Activated CD8-positive, alpha-beta T cell treated with anti-CD3 and anti-CD28 coated beads for 36 hours (primary cell): ENCODE measurements at regions of chr1 and their contacts with region 1.

Region 1: DNA sequence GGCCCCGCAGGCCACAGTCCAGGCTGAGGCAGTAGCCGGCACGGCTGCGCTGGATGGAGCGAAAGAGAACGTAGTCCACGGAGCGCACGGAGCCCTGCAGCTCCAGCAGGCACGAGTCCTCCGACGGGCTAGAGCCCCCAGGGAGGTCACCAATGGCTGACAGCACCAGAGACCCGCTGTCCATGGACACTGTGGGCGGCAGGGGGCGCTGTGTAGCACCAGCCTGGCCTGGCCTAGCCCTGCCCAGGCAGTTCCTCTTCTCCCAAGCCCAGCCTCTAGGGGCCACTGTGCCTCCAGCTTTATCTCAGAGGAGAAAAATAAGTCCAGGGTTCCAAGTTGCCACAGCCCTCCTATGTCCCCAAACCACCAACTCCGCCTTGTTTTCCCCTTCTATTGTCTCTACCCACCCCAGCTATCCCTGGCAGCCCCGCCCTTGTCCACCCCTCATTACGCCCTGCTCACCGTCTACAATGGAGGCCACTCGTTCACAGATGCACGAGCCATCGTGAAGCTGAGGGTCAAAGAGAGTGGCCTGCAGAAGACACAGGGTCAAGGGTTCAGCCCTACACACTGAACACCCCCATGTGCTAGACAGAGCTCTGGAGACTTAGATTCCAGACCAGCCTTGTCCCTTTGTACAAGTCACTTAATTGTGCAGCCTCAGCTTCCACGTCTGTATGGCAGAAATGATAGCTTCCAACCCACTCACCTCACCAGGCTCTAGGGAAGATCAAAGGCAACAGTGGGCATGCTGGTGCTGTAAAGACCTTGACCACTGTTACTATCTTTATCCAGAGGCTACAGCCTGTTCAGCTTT is 4.4 kb downstream of the ENTREP3 start:
- DNase-seq: peak; percentile 98
- ATAC-seq: peak; percentile 95
- H3K4me3 Mint-ChIP-seq: peak overlapping the region; percentile 60
- H3K27ac Mint-ChIP-seq: peak overlapping the region; percentile 62
- H3K4me1 Mint-ChIP-seq: peaks cover 30% of the 10 kb centered on the region
- H3K27me3 Mint-ChIP-seq: no peaks in the 10 kb centered on the region
- CTCF ChIP-seq: peak; percentile 99

Region 2: DNA sequence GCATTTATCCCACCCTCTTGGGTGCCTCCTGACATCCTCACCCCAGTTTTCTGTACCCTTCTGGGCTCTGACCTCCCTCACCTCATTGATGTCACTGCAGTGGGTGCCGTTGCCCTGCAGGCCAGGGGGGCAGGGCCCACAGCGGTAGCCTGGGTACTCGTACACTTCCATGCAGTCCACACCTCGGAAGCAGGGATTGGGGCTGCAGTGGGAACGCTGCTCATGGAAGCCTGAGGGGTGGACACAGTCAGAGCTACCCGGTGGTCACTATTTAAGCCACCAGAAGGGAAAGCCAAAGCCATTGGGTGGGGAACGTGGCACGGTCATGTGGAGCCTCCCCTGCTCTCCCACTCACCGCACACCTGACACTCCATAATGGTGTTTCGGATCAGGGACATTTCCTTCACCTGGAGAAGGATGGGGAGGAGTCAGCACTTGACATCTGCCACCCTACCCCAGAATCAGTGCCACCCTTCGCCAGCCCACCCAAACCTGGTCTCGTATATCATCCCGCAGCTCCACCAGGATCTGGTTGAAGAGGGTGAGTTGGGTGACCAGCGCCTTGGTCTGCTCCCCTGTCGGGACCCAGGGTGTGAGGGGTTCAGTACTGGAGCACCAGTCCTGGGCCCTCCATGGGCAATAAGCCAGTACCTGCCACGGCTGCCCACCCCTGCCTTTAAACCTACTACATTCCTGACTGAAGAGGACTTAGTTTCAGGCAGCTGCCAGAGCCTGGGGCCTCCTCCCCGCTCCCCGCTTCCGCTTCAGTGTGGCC is 47.9 kb before region 1 on chr1:
- CTCF ChIA-PET with region 1: interaction called, 47 read pairs
- POLR2A ChIA-PET with region 1: interaction called, 22 read pairs
- intact Hi-C with region 1: no loop called
- DNase-seq: no peak
- ATAC-seq: no peak
- H3K4me3 Mint-ChIP-seq: no peak overlapping the region
- H3K27ac Mint-ChIP-seq: no peak overlapping the region
- H3K4me1 Mint-ChIP-seq: peaks cover 11% of the 10 kb centered on the region
- H3K27me3 Mint-ChIP-seq: no peaks in the 10 kb centered on the region
- CTCF ChIP-seq: no peak

Region 3: DNA sequence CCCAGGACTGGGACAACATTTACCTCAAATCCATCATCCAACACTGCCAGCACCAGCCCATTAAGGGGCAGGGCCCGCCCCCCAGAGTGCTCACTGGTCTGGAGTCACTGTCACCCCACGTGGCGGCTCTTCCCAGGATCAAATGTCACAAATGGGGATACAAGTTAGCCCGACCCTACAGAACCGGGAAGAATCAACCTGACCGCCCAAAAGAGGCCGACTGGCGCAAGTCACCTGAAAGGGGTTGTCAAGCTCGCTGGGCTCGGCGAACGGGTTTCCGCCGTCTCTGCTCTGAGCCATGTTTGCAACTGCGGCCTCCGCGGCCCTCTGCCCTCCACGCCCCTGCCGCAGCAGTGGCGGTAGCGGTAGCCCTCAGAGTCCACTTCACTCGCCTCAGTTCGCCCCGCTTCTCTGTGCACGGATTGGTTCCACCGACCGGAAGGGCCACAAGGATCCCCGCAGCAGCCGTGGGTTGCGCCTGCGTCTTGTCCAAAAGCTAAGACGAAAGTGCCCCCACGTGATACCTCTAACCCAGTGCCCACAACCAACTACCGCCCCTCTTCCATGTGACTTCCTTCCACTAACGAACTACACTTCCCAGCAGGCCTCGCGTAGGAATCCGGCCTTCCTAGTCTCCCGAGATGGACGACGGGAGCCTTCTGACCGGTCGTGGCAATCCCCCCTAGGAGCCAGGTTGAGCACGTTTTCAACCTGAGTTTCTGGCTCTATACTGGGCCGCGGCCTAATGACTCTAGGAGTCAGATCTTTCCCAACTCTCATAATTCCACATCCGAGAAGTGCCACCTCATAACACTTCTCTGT is 11.2 kb after region 1 on chr1 and contains the start of gene SCAMP3:
- CTCF ChIA-PET with region 1: interaction called, 232 read pairs
- POLR2A ChIA-PET with region 1: interaction called, 33 read pairs
- intact Hi-C with region 1: no loop called
- DNase-seq: peak; percentile 97
- ATAC-seq: peak; percentile 93
- H3K4me3 Mint-ChIP-seq: peak within 1 kb of the TSS; percentile 96
- H3K27ac Mint-ChIP-seq: peak within 1 kb of the TSS; percentile 89
- H3K4me1 Mint-ChIP-seq: peaks cover 29% of the 10 kb centered on the region
- H3K27me3 Mint-ChIP-seq: no peaks in the 10 kb centered on the region
- CTCF ChIP-seq: no peak
- total RNA-seq, gene SCAMP3: 81.3 to 97.2 TPM

Region 4: GRCh38 chr1:155308493-155309422 is 57.9 kb after region 1 on chr1 and contains the start of gene FDPS:
- CTCF ChIA-PET with region 1: interaction called, 80 read pairs
- POLR2A ChIA-PET with region 1: interaction called, 4 read pairs
- intact Hi-C with region 1: no loop called
- DNase-seq: peak; percentile 99
- ATAC-seq: peak; percentile 98
- H3K4me3 Mint-ChIP-seq: peak within 1 kb of the TSS; percentile 92
- H3K27ac Mint-ChIP-seq: peak within 1 kb of the TSS; percentile 99
- H3K4me1 Mint-ChIP-seq: peaks cover 29% of the 10 kb centered on the region
- H3K27me3 Mint-ChIP-seq: no peaks in the 10 kb centered on the region
- CTCF ChIP-seq: no peak
- total RNA-seq, gene FDPS: 293 to 316 TPM

Region 5: DNA sequence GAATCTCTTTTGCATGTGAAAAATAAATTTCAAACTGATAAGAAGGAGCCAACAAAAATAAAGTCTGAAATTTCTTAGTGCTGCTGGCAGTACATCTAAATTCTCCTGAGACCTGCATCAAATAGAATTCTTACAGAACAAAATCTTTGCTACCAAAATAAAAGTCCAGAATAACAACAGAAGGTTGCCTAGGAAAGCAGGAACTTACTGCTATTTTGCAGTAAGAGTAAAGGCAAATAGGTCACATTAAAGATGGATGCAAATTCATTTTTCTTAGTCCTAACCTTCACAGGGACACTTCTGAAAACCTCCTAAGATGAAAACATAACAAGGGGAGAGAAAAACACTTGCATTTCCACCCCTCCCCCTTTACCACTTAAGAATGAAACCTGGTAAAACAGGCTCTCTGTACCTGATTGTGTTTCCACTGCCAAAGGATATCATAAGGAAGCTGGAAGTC is 128.8 kb after region 1 on chr1:
- CTCF ChIA-PET with region 1: interaction called, 11 read pairs
- POLR2A ChIA-PET with region 1: no interaction called
- intact Hi-C with region 1: no loop called
- DNase-seq: no peak
- ATAC-seq: no peak
- H3K4me3 Mint-ChIP-seq: no peak overlapping the region
- H3K27ac Mint-ChIP-seq: no peak overlapping the region
- H3K4me1 Mint-ChIP-seq: peaks cover 10% of the 10 kb centered on the region
- H3K27me3 Mint-ChIP-seq: no peaks in the 10 kb centered on the region
- CTCF ChIP-seq: no peak

Region 6: GRCh38 chr1:155598842-155599331 is 348.0 kb after region 1 on chr1:
- CTCF ChIA-PET with region 1: interaction called, 19 read pairs
- POLR2A ChIA-PET with region 1: no interaction called
- intact Hi-C with region 1: loop called (anchors 10 kb)
- DNase-seq: peak; percentile 15
- ATAC-seq: peak; percentile 42
- H3K4me3 Mint-ChIP-seq: peak overlapping the region; percentile 51
- H3K27ac Mint-ChIP-seq: peak overlapping the region; percentile 40
- H3K4me1 Mint-ChIP-seq: peaks cover 10% of the 10 kb centered on the region
- H3K27me3 Mint-ChIP-seq: no peaks in the 10 kb centered on the region
- CTCF ChIP-seq: no peak